CD4-positive, alpha-beta T cell (primary cell): ENCODE measurements at regions of chr22 and their contacts with region 1.

Region 1: DNA sequence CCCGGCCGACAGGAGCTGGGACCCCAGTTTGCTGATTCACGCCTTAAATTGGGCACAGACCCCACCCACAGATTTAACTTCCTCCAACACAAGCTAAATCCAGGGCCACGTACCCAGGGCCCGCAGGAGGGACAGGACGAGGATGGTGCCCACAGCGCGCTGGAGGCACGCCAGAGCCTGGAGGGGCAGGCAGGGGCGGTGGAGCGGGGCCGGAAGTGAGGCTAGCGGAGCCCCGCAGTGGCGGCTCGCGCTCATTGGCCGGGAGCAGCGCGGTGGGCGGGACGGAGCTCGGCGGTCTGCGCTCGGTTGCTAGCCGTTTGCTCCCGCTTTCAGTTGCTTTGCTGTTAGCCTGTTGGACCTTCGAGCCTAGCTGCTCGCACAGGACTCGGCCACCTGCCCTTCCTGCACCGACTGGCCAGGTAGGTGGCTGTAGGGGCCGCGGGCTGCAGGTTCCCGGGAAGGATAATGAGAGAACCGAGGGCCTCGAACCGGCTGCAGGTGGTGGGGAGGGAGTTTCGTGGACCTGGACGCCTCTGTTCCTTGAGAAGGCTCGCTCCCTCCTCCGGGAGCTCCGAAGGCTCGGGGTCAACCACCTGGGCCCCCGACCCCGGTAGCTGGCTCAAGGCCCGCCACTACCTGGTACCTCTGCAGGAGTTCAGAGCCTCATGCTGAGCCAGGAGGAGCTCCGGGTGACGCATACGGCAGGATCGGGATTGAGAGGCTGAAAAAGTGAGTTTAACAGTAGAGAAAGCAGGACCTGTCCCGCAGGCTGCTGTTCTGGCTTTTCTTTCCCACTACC is at the start of gene CCDC134:
- DNase-seq: peak; percentile 85 to 95 (median 90)
- ATAC-seq: peak; percentile 95
- H3K4me3 ChIP-seq: peak within 1 kb of the TSS; percentile 80
- H3K4me3 Mint-ChIP-seq: peak within 1 kb of the TSS; percentile 98
- H3K27ac ChIP-seq: peak within 1 kb of the TSS; percentile 87 to 91
- H3K27ac Mint-ChIP-seq: peak within 1 kb of the TSS; percentile 100
- H3K4me1 ChIP-seq: peaks cover 34% of the 10 kb centered on the region
- H3K4me1 Mint-ChIP-seq: peaks cover 40% of the 10 kb centered on the region
- H3K27me3 ChIP-seq: no peaks in the 10 kb centered on the region
- H3K27me3 Mint-ChIP-seq: no peaks in the 10 kb centered on the region
- CTCF ChIP-seq: no peak
- total RNA-seq, gene CCDC134: 14.1 to 16.2 TPM

Region 2: GRCh38 chr22:41688365-41689211 is 112.0 kb before region 1 on chr22 and contains the start of gene SNU13:
- CTCF ChIA-PET with region 1: no interaction called
- POLR2A ChIA-PET with region 1: interaction called, 39 read pairs
- intact Hi-C with region 1: no loop called
- DNase-seq: peak; percentile 87 to 97 (median 90)
- ATAC-seq: peak; percentile 92
- H3K4me3 ChIP-seq: peak within 1 kb of the TSS; percentile 91
- H3K4me3 Mint-ChIP-seq: peak within 1 kb of the TSS; percentile 96
- H3K27ac ChIP-seq: peak within 1 kb of the TSS; percentile 95 to 98
- H3K27ac Mint-ChIP-seq: peak within 1 kb of the TSS; percentile 99
- H3K4me1 ChIP-seq: peaks cover 39% of the 10 kb centered on the region
- H3K4me1 Mint-ChIP-seq: peaks cover 45% of the 10 kb centered on the region
- H3K27me3 ChIP-seq: no peaks in the 10 kb centered on the region
- H3K27me3 Mint-ChIP-seq: no peaks in the 10 kb centered on the region
- CTCF ChIP-seq: no peak
- total RNA-seq, gene SNU13: 134 to 140 TPM

Region 3: GRCh38 chr22:41746567-41747400 is 53.8 kb before region 1 on chr22:
- CTCF ChIA-PET with region 1: interaction called, 8 read pairs
- POLR2A ChIA-PET with region 1: interaction called, 19 read pairs
- intact Hi-C with region 1: loop called (anchors 2 to 5 kb)
- DNase-seq: peak; percentile 29 to 81 (median 44)
- ATAC-seq: peak; percentile 90
- H3K4me3 ChIP-seq: no peak overlapping the region
- H3K4me3 Mint-ChIP-seq: no peak overlapping the region
- H3K27ac ChIP-seq: no peak overlapping the region
- H3K27ac Mint-ChIP-seq: no peak overlapping the region
- H3K4me1 ChIP-seq: peaks cover 5% of the 10 kb centered on the region
- H3K4me1 Mint-ChIP-seq: no peaks in the 10 kb centered on the region
- H3K27me3 ChIP-seq: no peaks in the 10 kb centered on the region
- H3K27me3 Mint-ChIP-seq: peaks cover 10% of the 10 kb centered on the region
- CTCF ChIP-seq: peak; percentile 81

Region 4: GRCh38 chr22:41822317-41823060 is 21.9 kb after region 1 on chr22:
- CTCF ChIA-PET with region 1: no interaction called
- POLR2A ChIA-PET with region 1: interaction called, 12 read pairs
- intact Hi-C with region 1: no loop called
- DNase-seq: peak in 6 of 14 experiments; percentile 6 to 87 (median 66)
- ATAC-seq: peak; percentile 92
- H3K4me3 ChIP-seq: no peak overlapping the region
- H3K4me3 Mint-ChIP-seq: no peak overlapping the region
- H3K27ac ChIP-seq: no peak overlapping the region
- H3K27ac Mint-ChIP-seq: peak overlapping the region; percentile 69
- H3K4me1 ChIP-seq: peaks cover 5% of the 10 kb centered on the region
- H3K4me1 Mint-ChIP-seq: peaks cover 18% of the 10 kb centered on the region
- H3K27me3 ChIP-seq: no peaks in the 10 kb centered on the region
- H3K27me3 Mint-ChIP-seq: no peaks in the 10 kb centered on the region
- CTCF ChIP-seq: peak; percentile 60

Region 5: DNA sequence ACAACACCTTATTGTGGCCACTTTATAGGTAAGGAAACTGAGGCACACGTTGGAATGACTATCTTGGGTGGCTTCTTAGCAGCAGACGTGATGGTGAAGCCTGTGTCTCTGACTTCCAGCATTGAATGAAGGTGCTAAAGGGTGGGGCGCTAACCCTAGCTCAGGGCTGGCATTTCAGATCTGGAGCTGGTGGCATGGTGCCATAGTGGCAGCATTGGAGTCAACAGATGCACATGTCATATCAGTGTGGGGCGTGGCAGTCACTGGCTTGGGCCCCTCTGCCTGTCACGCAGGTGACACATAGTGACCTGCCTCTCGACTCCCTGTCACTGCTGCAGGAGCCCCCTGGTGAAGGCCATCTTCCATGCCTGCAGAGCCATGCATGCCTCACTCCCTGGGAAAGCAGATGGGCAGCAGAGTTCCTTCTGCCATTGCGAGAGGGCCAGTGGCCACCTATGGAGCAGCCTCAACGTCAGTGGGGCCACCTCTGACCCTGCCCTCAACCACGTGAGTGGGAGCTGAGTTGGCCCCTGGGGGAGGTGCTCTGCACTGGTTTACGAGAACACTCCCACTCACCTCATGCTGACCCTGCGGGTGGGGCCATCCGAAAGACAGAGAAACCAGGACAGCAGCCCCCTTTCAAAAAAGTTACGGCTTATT is 99.6 kb after region 1 on chr22:
- CTCF ChIA-PET with region 1: no interaction called
- POLR2A ChIA-PET with region 1: no interaction called
- intact Hi-C with region 1: no loop called
- DNase-seq: no peak
- ATAC-seq: no peak
- H3K4me3 ChIP-seq: no peak overlapping the region
- H3K4me3 Mint-ChIP-seq: no peak overlapping the region
- H3K27ac ChIP-seq: no peak overlapping the region
- H3K27ac Mint-ChIP-seq: no peak overlapping the region
- H3K4me1 ChIP-seq: peaks cover 6% of the 10 kb centered on the region
- H3K4me1 Mint-ChIP-seq: no peaks in the 10 kb centered on the region
- H3K27me3 ChIP-seq: no peaks in the 10 kb centered on the region
- H3K27me3 Mint-ChIP-seq: no peaks in the 10 kb centered on the region
- CTCF ChIP-seq: no peak

Region 6: DNA sequence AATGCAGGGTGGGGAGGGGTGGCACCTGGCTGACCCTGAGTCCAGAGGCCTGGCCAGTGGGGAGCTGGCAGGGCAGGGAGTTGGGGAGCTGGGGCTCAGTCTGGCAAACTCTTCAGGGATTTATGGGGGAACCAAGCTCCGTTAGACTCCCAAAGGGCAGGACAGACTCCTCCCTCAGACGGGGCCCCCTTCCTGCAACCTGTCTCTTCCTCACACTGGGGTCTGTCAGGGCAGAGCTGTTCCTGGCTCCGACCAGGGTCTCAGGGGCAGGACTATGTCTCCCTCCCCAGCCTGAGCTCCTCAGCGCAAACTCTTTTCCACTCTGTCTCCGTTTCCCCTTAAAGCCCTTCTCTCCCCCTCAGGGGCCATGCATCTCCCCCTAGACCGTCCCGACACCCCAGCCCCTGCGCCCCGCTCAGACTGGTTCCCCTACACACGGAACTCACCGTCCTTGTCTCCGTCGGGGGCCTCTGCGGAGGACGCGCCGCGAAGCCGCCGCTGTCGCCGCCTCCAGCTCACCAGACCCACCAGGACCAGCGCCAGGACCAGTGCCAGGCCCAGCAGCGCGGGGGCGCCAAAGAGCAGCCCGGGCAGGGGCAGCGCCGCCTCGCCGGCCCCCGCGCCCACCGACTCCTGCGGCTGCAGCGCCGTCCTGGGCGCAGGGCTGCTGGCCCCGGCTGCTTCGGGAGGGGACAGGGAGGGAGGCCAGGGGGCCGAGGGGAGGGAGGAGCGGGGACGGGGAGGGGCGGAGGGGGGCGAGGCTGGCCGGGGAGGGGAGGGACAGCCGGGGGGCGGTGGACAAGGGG is 125.3 kb after region 1 on chr22:
- CTCF ChIA-PET with region 1: no interaction called
- POLR2A ChIA-PET with region 1: interaction called, 16 read pairs
- intact Hi-C with region 1: no loop called
- DNase-seq: peak; percentile 59 to 88 (median 76)
- ATAC-seq: peak; percentile 84
- H3K4me3 ChIP-seq: peak overlapping the region; percentile 45
- H3K4me3 Mint-ChIP-seq: peak overlapping the region; percentile 80
- H3K27ac ChIP-seq: no peak overlapping the region
- H3K27ac Mint-ChIP-seq: peak overlapping the region; percentile 55
- H3K4me1 ChIP-seq: peaks cover 30% of the 10 kb centered on the region
- H3K4me1 Mint-ChIP-seq: peaks cover 7% of the 10 kb centered on the region
- H3K27me3 ChIP-seq: peaks cover 0 to 9% of the 10 kb centered on the region in 2 experiments
- H3K27me3 Mint-ChIP-seq: peaks cover 9% of the 10 kb centered on the region
- CTCF ChIP-seq: peak; percentile 75

Region 7: GRCh38 chr22:41998361-41999275 is 198.1 kb after region 1 on chr22 and contains the start of gene WBP2NL:
- CTCF ChIA-PET with region 1: no interaction called
- POLR2A ChIA-PET with region 1: no interaction called
- intact Hi-C with region 1: no loop called
- DNase-seq: peak; percentile 77 to 94 (median 88)
- ATAC-seq: peak; percentile 95
- H3K4me3 ChIP-seq: peak within 1 kb of the TSS; percentile 73
- H3K4me3 Mint-ChIP-seq: peak within 1 kb of the TSS; percentile 93
- H3K27ac ChIP-seq: peak within 1 kb of the TSS in 1 of 2 donors; percentile 61
- H3K27ac Mint-ChIP-seq: peak within 1 kb of the TSS; percentile 73
- H3K4me1 ChIP-seq: peaks cover 23% of the 10 kb centered on the region
- H3K4me1 Mint-ChIP-seq: peaks cover 23% of the 10 kb centered on the region
- H3K27me3 ChIP-seq: no peaks in the 10 kb centered on the region
- H3K27me3 Mint-ChIP-seq: no peaks in the 10 kb centered on the region
- CTCF ChIP-seq: no peak
- total RNA-seq, gene WBP2NL: 0.38 to 1.7 TPM